ENCODE measurements at regions of chr12 and their contacts with region 1.

Region 1: GRCh38 chr12:110704748-110705147 is 15.8 kb upstream of the HVCN1 start:
- DNase-seq: peak; percentile 44
- H3K4me3 ChIP-seq: no peak overlapping the region
- H3K27ac ChIP-seq: no peak overlapping the region
- H3K4me1 ChIP-seq: no peaks in the 10 kb centered on the region
- H3K27me3 ChIP-seq: no peaks in the 10 kb centered on the region
- CTCF ChIP-seq: peak; percentile 19 to 61 (median 41)
- EP300 ChIP-seq: no peak
- POLR2A ChIP-seq: no peak

Region 2: DNA sequence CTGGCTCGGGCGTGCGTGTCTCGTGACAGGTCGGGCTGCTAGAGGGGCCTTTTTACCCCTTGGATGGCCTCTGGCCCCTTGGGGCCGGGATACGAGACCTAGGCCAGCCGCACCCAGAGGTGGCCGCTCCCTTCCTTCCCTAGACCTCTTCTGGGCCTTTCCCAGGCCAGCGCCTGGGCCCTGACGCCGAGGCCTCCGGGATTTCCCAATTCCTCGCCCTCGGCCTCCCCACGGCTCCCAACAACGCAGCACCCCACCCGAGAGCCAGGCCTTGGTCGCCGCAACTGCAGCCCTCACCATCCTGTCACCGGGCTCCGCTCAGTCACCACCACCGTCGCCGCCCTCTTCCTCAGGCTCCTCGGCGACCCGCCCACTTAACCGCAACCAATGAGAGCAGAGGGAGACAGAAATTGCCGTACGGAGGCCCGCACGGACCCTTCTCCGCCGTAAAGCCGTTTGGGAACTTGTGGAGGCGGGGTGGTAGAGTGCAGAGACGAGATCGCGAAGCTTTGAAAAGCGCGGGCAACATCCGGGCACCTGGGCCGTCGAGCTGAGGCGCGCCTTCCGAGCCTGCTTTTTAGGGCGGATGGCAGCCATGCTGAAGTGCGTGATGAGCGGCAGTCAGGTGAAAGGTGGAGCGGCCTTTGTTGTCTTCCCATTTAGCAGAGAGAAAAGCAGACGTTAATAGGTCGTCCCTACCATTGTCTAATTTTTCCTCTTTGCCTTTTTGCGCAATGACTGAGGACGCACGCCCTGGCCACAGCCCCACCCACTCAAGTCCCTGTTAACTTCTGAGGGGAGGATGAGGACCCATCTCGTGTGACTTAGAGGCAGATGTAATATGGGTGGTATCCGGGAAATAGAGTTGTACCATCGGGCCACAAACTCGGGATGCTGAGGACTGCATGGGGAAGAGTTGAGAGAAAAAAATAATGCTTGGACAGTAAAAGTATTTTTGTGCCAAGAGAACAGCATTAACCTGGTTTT is 202.7 kb before region 1 on chr12 and contains the starts of genes RAD9B and VPS29:
- in situ Hi-C with region 1: loop called in 1 of 4 experiments (anchors 25 kb)
- intact Hi-C with region 1: no loop called
- DNase-seq: peak; percentile 99
- H3K4me3 ChIP-seq: peak within 1 kb of the TSS; percentile 57 to 89 (median 83)
- H3K27ac ChIP-seq: peak within 1 kb of the TSS; percentile 90 to 98 (median 93)
- H3K4me1 ChIP-seq: peaks cover 18 to 33% (median 25%) of the 10 kb centered on the region in 4 donors
- H3K27me3 ChIP-seq: no peaks in the 10 kb centered on the region
- CTCF ChIP-seq: peak in 1 of 5 experiments; percentile 11
- EP300 ChIP-seq: no peak
- POLR2A ChIP-seq: peak; percentile 97
- total RNA-seq, gene RAD9B: 0.27 to 0.32 TPM in 2 of 4 donors, not detected in the others
- total RNA-seq, gene VPS29: 16.3 to 142 (median 79.3) TPM

Region 3: DNA sequence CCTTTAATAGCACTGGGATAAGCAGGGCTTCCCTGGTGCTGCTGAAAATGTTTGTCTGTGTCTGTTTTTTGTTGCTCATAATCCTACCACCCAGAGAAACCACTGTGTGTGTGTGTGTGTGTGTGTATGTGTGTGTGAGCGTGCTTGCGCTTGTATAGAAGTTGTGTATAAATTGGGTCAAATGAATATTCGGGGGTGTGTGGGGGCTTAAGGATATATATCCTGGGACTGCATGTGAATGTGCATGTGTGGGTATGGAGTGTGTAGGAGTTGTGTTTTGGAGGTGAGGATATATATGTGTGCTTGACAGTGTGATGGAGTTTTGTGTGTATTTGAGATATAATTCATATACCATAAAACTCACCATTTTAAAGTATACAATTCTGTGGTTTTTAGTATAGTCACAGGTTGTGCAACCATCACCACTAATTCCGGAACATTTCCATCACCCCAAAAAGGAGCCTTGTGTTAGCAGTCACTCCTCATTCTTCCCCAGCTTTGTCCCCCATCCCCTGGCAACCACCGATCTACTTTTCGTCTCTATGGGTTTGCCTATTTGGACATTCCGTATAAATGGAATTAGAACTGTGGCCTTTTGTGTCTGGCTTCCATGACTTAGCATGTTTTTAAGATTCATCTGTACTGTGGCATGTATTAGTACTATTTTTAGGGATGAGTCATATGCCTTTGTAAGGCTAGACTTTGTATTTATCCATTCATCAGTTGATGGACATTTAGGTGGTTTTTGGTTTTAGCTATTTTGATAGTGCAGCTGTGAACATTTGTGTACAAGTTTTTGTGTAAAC is 65.2 kb before region 1 on chr12:
- in situ Hi-C with region 1: no loop called
- intact Hi-C with region 1: no loop called
- DNase-seq: no peak
- H3K4me3 ChIP-seq: no peak overlapping the region
- H3K27ac ChIP-seq: peak overlapping the region in 3 of 4 donors; percentile 29 to 57 (median 44)
- H3K4me1 ChIP-seq: peaks cover 0 to 8% (median 0%) of the 10 kb centered on the region in 4 donors
- H3K27me3 ChIP-seq: no peaks in the 10 kb centered on the region
- CTCF ChIP-seq: no peak
- EP300 ChIP-seq: no peak
- POLR2A ChIP-seq: no peak

Region 4: GRCh38 chr12:110661337-110661972 is 43.3 kb before region 1 on chr12:
- in situ Hi-C with region 1: no loop called
- intact Hi-C with region 1: no loop called
- DNase-seq: peak; percentile 66
- H3K4me3 ChIP-seq: peak overlapping the region in 1 of 4 donors; percentile 1
- H3K27ac ChIP-seq: no peak overlapping the region
- H3K4me1 ChIP-seq: no peaks in the 10 kb centered on the region
- H3K27me3 ChIP-seq: no peaks in the 10 kb centered on the region
- CTCF ChIP-seq: no peak
- EP300 ChIP-seq: no peak
- POLR2A ChIP-seq: no peak

Region 5: DNA sequence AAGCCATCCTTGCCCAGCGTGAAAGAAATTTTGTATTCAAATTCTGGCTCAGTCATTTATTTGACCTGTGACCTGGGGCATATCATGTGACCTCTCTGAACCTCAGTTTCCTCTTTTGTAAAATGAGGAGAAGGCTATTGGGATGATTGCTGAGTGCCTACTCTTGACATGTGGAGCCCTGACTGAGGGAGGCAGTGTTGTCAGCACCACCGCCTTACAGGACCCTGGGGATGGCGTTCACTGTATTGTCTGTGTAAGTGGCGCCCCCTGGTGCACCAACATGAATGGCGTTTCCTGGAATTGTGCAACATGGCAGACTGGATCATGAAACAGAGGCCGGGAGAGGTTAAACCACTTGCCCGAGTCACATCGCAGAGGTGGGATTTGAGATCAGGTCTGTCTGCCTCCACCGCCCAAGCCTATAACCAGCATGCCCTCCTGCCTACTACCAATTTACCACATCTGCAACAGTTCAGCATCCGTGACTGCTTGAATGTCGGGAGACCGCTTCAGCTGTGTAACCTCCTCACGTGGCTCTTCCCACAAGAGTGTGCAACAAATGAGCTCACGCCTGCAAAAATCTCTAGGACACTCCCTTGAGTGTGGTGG is 121.9 kb after region 1 on chr12:
- in situ Hi-C with region 1: loop called in 3 of 4 experiments (anchors 5 to 25 kb)
- intact Hi-C with region 1: no loop called
- DNase-seq: peak; percentile 91
- H3K4me3 ChIP-seq: no peak overlapping the region
- H3K27ac ChIP-seq: no peak overlapping the region
- H3K4me1 ChIP-seq: peaks cover 0 to 5% (median 0%) of the 10 kb centered on the region in 4 donors
- H3K27me3 ChIP-seq: no peaks in the 10 kb centered on the region
- CTCF ChIP-seq: peak; percentile 70 to 96 (median 86)
- EP300 ChIP-seq: no peak
- POLR2A ChIP-seq: no peak

Measured in transverse colon (tissue), 4 donors.